Activated naive CD4-positive, alpha-beta T cell treated with anti-CD3 and anti-CD28 coated beads for 36 hours (primary cell): ENCODE measurements at regions of chr4 and their contacts with region 1.

Region 1: DNA sequence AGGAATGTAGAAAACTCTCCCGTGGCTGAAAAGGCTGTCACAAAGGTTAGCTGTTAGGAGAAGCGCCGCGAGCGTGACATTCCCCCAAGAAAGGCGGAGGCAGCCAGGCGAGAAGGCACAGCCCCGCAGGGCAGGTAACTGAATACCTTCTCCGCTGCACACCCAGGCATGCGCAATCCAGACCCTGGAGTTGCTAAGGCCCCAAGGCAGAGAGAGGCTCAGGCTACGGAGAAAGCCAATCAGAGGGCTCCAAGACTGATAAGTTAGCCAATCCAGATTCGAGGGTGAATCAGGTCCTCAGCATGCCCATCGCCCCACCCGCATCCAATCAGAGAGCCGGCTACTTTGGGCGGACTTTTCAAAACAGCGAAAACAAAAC is 485 bp upstream of the CCNG2 start:
- DNase-seq: peak; percentile 97
- H3K4me3 Mint-ChIP-seq: peak overlapping the region; percentile 98
- H3K27ac Mint-ChIP-seq: peak overlapping the region; percentile 97
- H3K4me1 Mint-ChIP-seq: peaks cover 21% of the 10 kb centered on the region
- H3K27me3 Mint-ChIP-seq: no peaks in the 10 kb centered on the region

Region 2: GRCh38 chr4:75514131-75514948 is 1642.2 kb before region 1 on chr4 and contains the starts of genes RCHY1 and THAP6:
- CTCF ChIA-PET with region 1: no interaction called
- intact Hi-C with region 1: loop called (anchors 5 kb)
- DNase-seq: peak; percentile 94
- H3K4me3 Mint-ChIP-seq: no peak within 1 kb of the TSS
- H3K27ac Mint-ChIP-seq: peak within 1 kb of the TSS; percentile 98
- H3K4me1 Mint-ChIP-seq: peaks cover 39% of the 10 kb centered on the region
- H3K27me3 Mint-ChIP-seq: no peaks in the 10 kb centered on the region
- total RNA-seq, gene RCHY1: 31.3 to 34.6 TPM
- total RNA-seq, gene THAP6: 14.3 to 15.4 TPM

Region 3: GRCh38 chr4:76213415-76214176 is 942.9 kb before region 1 on chr4 and contains the start of gene SCARB2:
- CTCF ChIA-PET with region 1: no interaction called
- intact Hi-C with region 1: loop called (anchors 5 kb)
- DNase-seq: peak; percentile 76
- H3K4me3 Mint-ChIP-seq: peak within 1 kb of the TSS; percentile 76
- H3K27ac Mint-ChIP-seq: peak within 1 kb of the TSS; percentile 74
- H3K4me1 Mint-ChIP-seq: peaks cover 31% of the 10 kb centered on the region
- H3K27me3 Mint-ChIP-seq: no peaks in the 10 kb centered on the region
- total RNA-seq, gene SCARB2: 5.4 to 7.8 TPM

Region 4: DNA sequence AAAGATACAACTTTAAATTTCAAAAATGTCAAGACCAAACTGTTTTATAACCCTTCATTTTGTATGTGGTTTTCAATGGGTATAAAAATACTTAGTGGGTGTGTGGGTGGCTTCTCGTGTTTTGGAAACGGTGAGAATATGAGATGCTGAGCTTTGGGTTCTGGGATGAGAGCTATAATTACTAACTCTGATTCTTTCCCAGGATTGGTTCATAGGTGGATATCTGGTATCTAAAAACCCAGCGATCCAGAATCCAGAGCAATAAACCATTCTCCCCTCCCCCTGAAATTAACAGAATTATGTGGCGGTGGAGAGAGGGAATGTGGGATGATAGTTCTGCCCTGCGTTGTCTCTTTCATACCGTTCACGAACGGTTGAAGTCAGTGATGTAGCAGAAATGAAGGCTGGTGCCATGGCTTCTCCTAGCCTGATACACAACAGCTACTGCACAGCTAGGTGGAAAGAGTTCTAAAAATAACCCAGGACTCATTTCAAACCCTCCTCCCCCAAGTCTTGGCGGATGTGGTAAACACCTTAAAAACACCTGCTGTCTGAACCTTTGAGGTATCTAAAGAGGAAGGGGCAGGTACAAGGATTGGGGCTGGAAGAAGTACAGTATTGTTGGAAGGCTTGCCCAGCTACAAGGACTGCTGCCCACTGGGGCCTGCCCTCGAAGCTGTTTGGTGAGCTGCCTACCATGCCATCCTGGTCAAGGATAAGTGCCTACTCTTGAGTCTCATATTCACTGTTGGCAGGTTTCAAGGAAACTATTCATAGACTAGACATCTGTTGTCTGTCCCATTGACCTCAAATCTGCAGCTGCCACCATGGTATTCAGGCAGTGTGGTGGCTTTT is 162.5 kb before region 1 on chr4:
- CTCF ChIA-PET with region 1: no interaction called
- intact Hi-C with region 1: loop called (anchors 5 kb)
- DNase-seq: peak; percentile 82
- H3K4me3 Mint-ChIP-seq: peak overlapping the region; percentile 53
- H3K27ac Mint-ChIP-seq: peak overlapping the region; percentile 65
- H3K4me1 Mint-ChIP-seq: peaks cover 57% of the 10 kb centered on the region
- H3K27me3 Mint-ChIP-seq: no peaks in the 10 kb centered on the region

Region 5: DNA sequence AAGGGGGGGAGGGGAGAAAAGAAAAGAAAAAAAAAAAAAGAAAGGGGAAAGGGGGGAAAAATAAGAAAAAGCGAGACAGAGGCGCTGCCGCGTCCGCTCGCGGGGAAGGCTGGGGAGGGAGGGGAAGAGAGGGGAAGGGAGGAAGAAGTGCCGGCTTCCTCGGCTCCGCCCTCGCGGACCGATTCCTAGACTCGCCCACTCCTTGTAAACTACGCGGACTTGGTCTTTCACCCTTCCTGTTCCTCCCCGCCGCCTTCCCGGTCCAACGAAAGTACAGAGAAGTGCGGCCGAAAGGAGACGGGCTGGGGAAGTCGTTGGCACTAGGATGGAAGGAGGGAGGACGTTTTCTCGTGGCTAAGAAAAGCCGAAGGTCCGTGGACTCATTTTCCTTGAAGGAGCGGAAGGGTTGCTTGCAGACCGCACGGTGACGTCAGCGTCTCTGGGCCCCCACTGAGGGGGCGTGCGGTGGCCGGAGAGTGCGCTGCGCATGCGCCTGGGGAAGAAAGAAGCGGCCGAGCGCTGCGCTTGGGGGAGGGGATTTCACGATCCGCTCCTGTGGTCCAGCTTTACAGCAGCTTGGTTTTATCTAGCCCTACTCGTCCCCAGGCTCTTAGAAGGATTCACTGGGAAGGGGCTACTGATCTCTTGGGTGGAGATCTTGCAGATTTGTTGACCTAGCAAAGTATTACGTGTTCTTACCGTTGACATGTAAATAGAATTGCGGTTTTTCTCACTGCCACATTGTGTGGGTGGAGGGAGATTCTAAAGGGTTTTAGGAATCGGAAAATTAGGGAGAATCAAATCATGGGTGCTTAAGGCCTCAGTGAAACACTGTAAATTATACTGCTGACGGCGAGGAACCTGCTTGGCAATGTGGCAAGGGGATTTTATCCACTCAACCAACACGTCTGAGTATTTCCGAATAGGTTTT is 80.4 kb before region 1 on chr4 and contains the start of gene CCNI:
- CTCF ChIA-PET with region 1: interaction called, 3 read pairs
- intact Hi-C with region 1: loop called (anchors 1 kb)
- DNase-seq: peak; percentile 93
- H3K4me3 Mint-ChIP-seq: peak within 1 kb of the TSS; percentile 99
- H3K27ac Mint-ChIP-seq: peak within 1 kb of the TSS; percentile 100
- H3K4me1 Mint-ChIP-seq: peaks cover 40% of the 10 kb centered on the region
- H3K27me3 Mint-ChIP-seq: no peaks in the 10 kb centered on the region
- total RNA-seq, gene CCNI: 211 to 218 TPM

Region 6: GRCh38 chr4:77193511-77194102 is 37.1 kb after region 1 on chr4:
- CTCF ChIA-PET with region 1: interaction called, 4 read pairs
- intact Hi-C with region 1: loop called (anchors 1 kb)
- DNase-seq: peak; percentile 83
- H3K4me3 Mint-ChIP-seq: peak overlapping the region; percentile 85
- H3K27ac Mint-ChIP-seq: peak overlapping the region; percentile 59
- H3K4me1 Mint-ChIP-seq: peaks cover 13% of the 10 kb centered on the region
- H3K27me3 Mint-ChIP-seq: no peaks in the 10 kb centered on the region